CD8-positive, alpha-beta memory T cell (primary cell): ENCODE measurements at regions of chr16 and their contacts with region 1.

Region 1: DNA sequence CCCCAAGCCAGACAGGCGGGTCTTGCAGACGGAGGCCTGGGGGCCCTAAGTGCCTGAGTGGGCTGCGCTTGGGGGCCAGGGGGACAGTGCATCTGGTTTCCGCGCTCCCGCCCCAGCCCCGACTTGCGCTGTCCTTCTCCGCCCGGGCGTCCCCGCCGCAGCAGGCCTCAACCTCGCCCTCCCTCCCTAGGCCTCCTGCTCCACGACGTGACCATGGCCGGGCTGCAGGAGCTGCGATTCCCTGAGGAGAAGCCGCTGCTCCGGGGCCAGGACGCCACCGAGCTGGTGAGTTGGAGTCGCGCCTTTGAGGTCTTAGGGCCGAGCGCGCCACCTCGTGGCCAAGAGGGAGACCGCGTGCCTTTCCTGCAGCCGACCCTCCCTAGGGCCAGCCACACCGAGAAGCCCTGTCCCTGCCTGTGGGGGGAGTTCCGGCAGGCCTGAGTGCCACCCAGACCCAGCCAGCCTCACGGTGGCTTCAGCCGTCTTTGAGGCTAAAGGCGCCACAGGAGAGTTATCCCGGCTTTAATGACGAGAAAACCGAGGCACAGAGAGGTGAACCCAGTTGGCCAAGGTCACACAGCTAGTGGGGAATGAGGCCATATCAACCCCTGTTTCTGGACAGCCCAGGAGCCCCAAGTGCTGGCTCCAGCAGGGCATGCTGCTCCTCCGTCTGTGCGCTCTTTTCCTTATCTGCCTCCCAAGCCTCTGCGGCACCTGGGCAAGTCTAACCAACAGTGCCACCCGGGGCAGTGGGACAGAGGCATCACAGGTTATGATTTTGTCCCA is 12.2 kb upstream of the NDRG4 start:
- DNase-seq: peak; percentile 56 to 74 (median 66)
- H3K4me3 ChIP-seq: no peak overlapping the region
- H3K4me3 Mint-ChIP-seq: peak overlapping the region in 1 of 7 donors; percentile 40
- H3K27ac ChIP-seq: no peak overlapping the region
- H3K27ac Mint-ChIP-seq: peak overlapping the region in 2 of 8 donors; percentile 10 to 14
- H3K4me1 ChIP-seq: no peaks in the 10 kb centered on the region
- H3K4me1 Mint-ChIP-seq: no peaks in the 10 kb centered on the region
- H3K27me3 ChIP-seq: no peaks in the 10 kb centered on the region
- H3K27me3 Mint-ChIP-seq: peaks cover 9 to 16% of the 10 kb centered on the region in 2 donors

Region 2: GRCh38 chr16:58336332-58337089 is 151.2 kb before region 1 on chr16:
- CTCF ChIA-PET with region 1: interaction called, 105 read pairs
- POLR2A ChIA-PET with region 1: no interaction called
- DNase-seq: peak; percentile 68 to 84 (median 72)
- H3K4me3 ChIP-seq: no peak overlapping the region
- H3K4me3 Mint-ChIP-seq: peak overlapping the region in 3 of 7 donors; percentile 56 to 58 (median 57)
- H3K27ac ChIP-seq: no peak overlapping the region
- H3K27ac Mint-ChIP-seq: no peak overlapping the region
- H3K4me1 ChIP-seq: no peaks in the 10 kb centered on the region
- H3K4me1 Mint-ChIP-seq: peaks cover 7 to 8% (median 8%) of the 10 kb centered on the region in 3 donors
- H3K27me3 ChIP-seq: no peaks in the 10 kb centered on the region
- H3K27me3 Mint-ChIP-seq: peaks cover 5 to 15% of the 10 kb centered on the region in 2 donors

Region 3: DNA sequence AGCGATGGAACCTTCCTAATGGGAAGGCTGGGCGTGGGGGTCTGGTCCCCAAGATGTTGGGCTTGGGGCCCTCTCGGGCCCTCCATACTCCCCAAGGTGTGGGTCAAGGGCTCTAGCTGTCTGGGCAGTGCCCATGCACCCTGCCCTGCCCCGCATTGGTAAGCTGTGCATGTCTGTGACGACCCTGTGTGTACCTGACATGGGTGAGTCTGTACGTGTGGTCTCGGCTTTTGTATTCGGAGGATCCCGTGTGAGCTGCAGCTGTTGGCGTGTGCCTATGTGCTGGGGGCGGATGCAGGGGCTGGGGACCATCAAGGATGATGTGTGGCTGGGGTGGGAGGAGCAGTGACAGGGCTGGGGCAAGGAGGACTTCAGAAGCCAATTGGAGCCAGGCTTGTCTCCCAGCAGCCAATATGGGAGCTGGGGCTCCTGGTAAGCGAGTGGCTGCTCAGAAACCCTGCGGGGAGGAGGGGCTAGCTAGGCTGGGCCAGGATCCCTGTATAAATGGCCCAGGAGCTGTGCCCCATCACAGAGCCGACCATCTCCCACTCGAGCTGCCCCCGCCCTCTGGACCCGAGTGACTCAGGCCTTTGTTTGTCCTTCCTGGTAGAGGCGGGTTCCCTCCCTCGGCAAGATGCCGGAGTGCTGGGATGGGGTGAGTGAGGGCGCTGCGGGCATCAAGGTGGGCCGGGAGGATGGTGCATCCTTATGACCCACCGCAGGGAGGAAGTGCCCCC is 12.0 kb after region 1 on chr16 and contains the start of gene NDRG4:
- CTCF ChIA-PET with region 1: interaction called, 11 read pairs
- POLR2A ChIA-PET with region 1: no interaction called
- DNase-seq: peak in 4 of 5 donors; percentile 14 to 69 (median 52)
- H3K4me3 ChIP-seq: peak within 1 kb of the TSS; percentile 58
- H3K4me3 Mint-ChIP-seq: peak within 1 kb of the TSS; percentile 37 to 74 (median 62)
- H3K27ac ChIP-seq: no peak within 1 kb of the TSS
- H3K27ac Mint-ChIP-seq: peak within 1 kb of the TSS in 2 of 8 donors; percentile 58 to 63
- H3K4me1 ChIP-seq: peaks cover 23% of the 10 kb centered on the region
- H3K4me1 Mint-ChIP-seq: peaks cover 13 to 33% (median 23%) of the 10 kb centered on the region in 3 donors
- H3K27me3 ChIP-seq: no peaks in the 10 kb centered on the region
- H3K27me3 Mint-ChIP-seq: peaks cover 26 to 50% of the 10 kb centered on the region in 2 donors
- total RNA-seq, gene NDRG4: 1.6 to 2.4 TPM